ENCODE measurements at regions of chr3 and their contacts with region 1.

Region 1: DNA sequence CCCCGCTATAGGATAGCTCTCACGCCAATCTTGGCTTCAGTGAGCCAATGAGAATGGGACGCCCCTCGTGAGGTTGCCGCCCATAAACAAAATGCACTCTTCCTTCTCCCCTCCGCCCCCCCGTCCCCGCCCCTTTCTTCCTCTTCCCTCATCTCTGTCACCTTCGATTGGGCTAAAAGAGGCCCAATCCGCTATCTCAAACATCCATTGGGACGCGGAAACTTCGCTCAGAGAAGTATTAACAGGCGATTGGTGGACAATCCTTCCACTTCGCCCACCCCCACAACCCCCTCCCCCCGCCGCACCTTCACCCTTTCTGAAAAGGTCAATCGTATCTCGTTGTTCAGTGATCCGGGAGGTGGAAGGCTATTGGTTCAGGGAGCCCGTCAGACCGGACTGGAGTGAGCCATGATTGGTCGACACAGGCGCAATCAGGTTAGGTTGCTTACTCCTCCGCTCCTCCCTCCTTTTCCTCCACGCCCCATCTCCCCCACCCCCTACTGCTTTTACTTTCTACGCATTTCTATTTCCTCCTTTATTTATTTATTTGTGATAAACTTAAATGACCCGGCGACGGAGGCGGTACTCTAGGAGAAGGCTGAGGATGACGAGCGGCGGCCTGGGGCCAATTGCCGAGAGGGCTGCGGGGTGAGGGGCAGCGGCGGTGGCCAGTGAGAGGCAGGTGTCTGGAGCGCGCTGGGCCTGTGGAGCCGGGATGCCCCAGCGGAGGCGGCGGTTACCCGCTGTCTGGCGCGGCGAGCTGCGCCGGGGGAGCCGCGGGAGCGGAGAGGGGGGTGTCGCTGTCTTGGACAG is 447 bp upstream of the ZBTB20 start:
- DNase-seq: peak; percentile 97 to 100 (median 98)
- H3K4me3 ChIP-seq: peak overlapping the region; percentile 43 to 73
- H3K4me3 Mint-ChIP-seq: peak overlapping the region; percentile 93 to 100 (median 98)
- H3K27ac ChIP-seq: peak overlapping the region; percentile 97
- H3K27ac Mint-ChIP-seq: peak overlapping the region; percentile 90 to 100 (median 100)
- H3K4me1 ChIP-seq: peaks cover 25% of the 10 kb centered on the region
- H3K4me1 Mint-ChIP-seq: peaks cover 16 to 48% (median 28%) of the 10 kb centered on the region in 4 donors
- H3K27me3 ChIP-seq: no peaks in the 10 kb centered on the region
- H3K27me3 Mint-ChIP-seq: no peaks in the 10 kb centered on the region

Region 2: GRCh38 chr3:115092220-115092791 is 55.2 kb before region 1 on chr3:
- CTCF ChIA-PET with region 1: interaction called, 6 read pairs
- POLR2A ChIA-PET with region 1: interaction called, 21 read pairs
- intact Hi-C with region 1: loop called (anchors 2 kb)
- DNase-seq: peak; percentile 43 to 62 (median 48)
- H3K4me3 ChIP-seq: no peak overlapping the region
- H3K4me3 Mint-ChIP-seq: no peak overlapping the region
- H3K27ac ChIP-seq: no peak overlapping the region
- H3K27ac Mint-ChIP-seq: no peak overlapping the region
- H3K4me1 ChIP-seq: peaks cover 4% of the 10 kb centered on the region
- H3K4me1 Mint-ChIP-seq: peaks cover 12 to 20% (median 16%) of the 10 kb centered on the region in 4 donors
- H3K27me3 ChIP-seq: no peaks in the 10 kb centered on the region
- H3K27me3 Mint-ChIP-seq: no peaks in the 10 kb centered on the region

Region 3: GRCh38 chr3:115099986-115100571 is 47.5 kb before region 1 on chr3:
- CTCF ChIA-PET with region 1: interaction called, 13 read pairs
- POLR2A ChIA-PET with region 1: interaction called, 92 read pairs
- intact Hi-C with region 1: loop called (anchors 1 kb)
- DNase-seq: peak; percentile 64 to 76 (median 72)
- H3K4me3 ChIP-seq: peak overlapping the region; percentile 21 to 46
- H3K4me3 Mint-ChIP-seq: peak overlapping the region; percentile 80 to 93 (median 88)
- H3K27ac ChIP-seq: peak overlapping the region; percentile 35
- H3K27ac Mint-ChIP-seq: peak overlapping the region; percentile 77 to 95 (median 89)
- H3K4me1 ChIP-seq: peaks cover 32% of the 10 kb centered on the region
- H3K4me1 Mint-ChIP-seq: peaks cover 29 to 36% (median 33%) of the 10 kb centered on the region in 4 donors
- H3K27me3 ChIP-seq: no peaks in the 10 kb centered on the region
- H3K27me3 Mint-ChIP-seq: no peaks in the 10 kb centered on the region

Region 4: GRCh38 chr3:115134648-115135347 is 12.7 kb before region 1 on chr3:
- CTCF ChIA-PET with region 1: no interaction called
- POLR2A ChIA-PET with region 1: interaction called, 14 read pairs
- intact Hi-C with region 1: no loop called
- DNase-seq: no peak
- H3K4me3 ChIP-seq: no peak overlapping the region
- H3K4me3 Mint-ChIP-seq: no peak overlapping the region
- H3K27ac ChIP-seq: no peak overlapping the region
- H3K27ac Mint-ChIP-seq: peak overlapping the region in 1 of 7 donors; percentile 4
- H3K4me1 ChIP-seq: no peaks in the 10 kb centered on the region
- H3K4me1 Mint-ChIP-seq: peaks cover 6 to 12% (median 8%) of the 10 kb centered on the region in 4 donors
- H3K27me3 ChIP-seq: no peaks in the 10 kb centered on the region
- H3K27me3 Mint-ChIP-seq: no peaks in the 10 kb centered on the region

Region 5: DNA sequence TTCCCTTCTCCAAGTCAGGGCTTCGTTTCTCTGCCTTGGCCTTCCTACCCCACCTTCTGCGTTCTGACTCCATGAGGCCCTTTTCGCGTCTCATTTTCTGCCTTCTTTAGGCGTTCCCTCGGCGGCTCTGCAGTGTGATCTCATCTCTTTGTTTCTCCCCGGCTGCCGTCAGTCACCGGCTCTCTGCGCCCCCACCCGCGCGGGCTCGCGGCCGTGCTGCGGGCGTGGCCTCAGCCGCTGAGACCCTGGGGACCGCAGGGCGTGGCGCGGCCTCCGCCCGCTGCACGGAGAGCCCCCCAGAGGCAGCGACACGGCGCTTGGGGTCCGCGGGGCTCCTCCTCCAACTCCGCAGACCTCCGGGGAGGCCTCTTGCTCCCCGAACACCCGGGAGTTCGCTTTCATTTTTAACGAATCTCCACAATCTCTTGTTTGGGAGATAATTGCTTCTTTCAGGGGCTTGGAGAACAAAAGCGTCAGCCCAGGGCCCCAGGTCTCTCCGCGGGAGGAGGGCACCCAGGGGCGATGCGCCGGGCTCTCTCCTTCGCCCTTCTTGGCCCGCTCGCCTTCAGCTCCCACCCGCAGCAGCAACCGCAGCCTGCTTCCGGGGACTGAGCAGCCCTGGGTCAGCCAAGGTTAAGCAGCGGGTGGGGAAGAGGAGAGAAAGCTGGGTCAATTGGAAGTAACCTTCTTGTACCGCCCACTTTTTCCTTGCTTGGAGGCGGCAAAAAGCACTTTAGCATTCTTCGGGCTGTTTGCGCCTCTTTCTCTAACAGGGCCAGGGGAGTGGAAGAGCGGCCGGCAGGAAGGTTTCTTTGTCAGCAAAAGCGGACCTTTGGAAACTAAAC is 511.0 kb after region 1 on chr3:
- CTCF ChIA-PET with region 1: no interaction called
- POLR2A ChIA-PET with region 1: interaction called, 3 read pairs
- intact Hi-C with region 1: loop called (anchors 5 kb)
- DNase-seq: peak; percentile 62 to 76 (median 73)
- H3K4me3 ChIP-seq: peak overlapping the region; percentile 61
- H3K4me3 Mint-ChIP-seq: peak overlapping the region; percentile 91 to 98 (median 95)
- H3K27ac ChIP-seq: peak overlapping the region; percentile 61
- H3K27ac Mint-ChIP-seq: peak overlapping the region; percentile 83 to 100 (median 99)
- H3K4me1 ChIP-seq: peaks cover 28% of the 10 kb centered on the region
- H3K4me1 Mint-ChIP-seq: peaks cover 16 to 32% (median 21%) of the 10 kb centered on the region in 4 donors
- H3K27me3 ChIP-seq: no peaks in the 10 kb centered on the region
- H3K27me3 Mint-ChIP-seq: no peaks in the 10 kb centered on the region

Region 6: GRCh38 chr3:115727135-115727534 is 579.6 kb after region 1 on chr3:
- CTCF ChIA-PET with region 1: no interaction called
- POLR2A ChIA-PET with region 1: no interaction called
- intact Hi-C with region 1: no loop called
- DNase-seq: no peak
- H3K4me3 ChIP-seq: no peak overlapping the region
- H3K4me3 Mint-ChIP-seq: no peak overlapping the region
- H3K27ac ChIP-seq: no peak overlapping the region
- H3K27ac Mint-ChIP-seq: peak overlapping the region in 1 of 7 donors; percentile 32
- H3K4me1 ChIP-seq: no peaks in the 10 kb centered on the region
- H3K4me1 Mint-ChIP-seq: no peaks in the 10 kb centered on the region
- H3K27me3 ChIP-seq: no peaks in the 10 kb centered on the region
- H3K27me3 Mint-ChIP-seq: peaks cover 0 to 3% of the 10 kb centered on the region in 2 donors

Measured in CD4-positive, alpha-beta memory T cell (primary cell).